ENCODE measurements at regions of chr6 and their contacts with region 1.

Region 1: GRCh38 chr6:144215932-144216667 is 65.8 kb downstream of the STX11 start:
- DNase-seq: peak; percentile 100
- H3K4me3 ChIP-seq: peak overlapping the region; percentile 68 to 77 (median 74)
- H3K27ac ChIP-seq: peak overlapping the region; percentile 89 to 96 (median 95)
- H3K4me1 ChIP-seq: peaks cover 18 to 26% (median 23%) of the 10 kb centered on the region in 4 donors
- H3K27me3 ChIP-seq: no peaks in the 10 kb centered on the region
- CTCF ChIP-seq: peak; percentile 30 to 66 (median 53)
- EP300 ChIP-seq: no peak
- POLR2A ChIP-seq: no peak

Region 2: GRCh38 chr6:144104898-144105487 is 111.1 kb before region 1 on chr6:
- intact Hi-C with region 1: loop called (anchors 2 kb)
- DNase-seq: no peak
- H3K4me3 ChIP-seq: no peak overlapping the region
- H3K27ac ChIP-seq: no peak overlapping the region
- H3K4me1 ChIP-seq: no peaks in the 10 kb centered on the region
- H3K27me3 ChIP-seq: no peaks in the 10 kb centered on the region
- CTCF ChIP-seq: peak; percentile 61 to 64 (median 62)
- EP300 ChIP-seq: no peak
- POLR2A ChIP-seq: no peak

Region 3: DNA sequence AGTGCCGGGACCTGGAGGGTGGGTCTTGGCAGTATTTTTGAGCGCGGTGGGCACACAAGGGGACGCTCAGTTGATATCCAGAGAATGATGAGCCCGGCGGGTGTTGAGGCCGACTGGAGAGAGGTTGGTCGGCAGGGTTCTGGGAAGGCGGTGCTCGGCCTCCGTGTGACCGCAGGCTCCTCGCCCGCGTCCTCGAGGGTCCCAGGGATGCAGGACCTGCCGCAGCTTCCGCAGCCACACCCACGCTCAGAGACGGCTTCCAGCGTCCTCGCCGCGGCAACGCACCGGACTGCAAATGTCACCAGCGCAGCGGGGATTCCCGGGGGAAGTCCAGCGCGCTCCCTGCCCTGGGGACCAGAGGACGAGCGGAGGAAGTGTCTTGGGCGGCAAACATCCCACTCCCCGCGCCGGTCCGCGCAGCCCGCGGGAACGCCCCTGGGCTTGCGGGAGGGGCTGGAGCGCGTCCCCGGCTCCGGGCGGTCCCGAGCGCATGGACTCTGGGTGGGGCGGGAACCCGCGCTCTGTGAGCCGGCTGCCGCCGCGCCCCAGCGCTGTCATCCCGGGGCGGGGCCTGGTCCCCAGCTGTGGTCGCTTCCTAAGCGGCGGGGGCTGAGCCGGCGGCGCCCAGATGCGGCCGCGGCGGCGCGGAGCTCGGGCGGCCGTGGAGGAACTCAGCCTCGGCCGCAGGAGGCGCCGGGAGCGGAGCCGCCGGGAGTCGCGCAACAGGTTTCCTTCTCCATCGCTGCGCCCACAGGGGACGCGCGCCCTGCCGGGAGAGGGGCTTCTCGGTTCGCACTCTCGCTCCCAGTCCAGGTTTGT is 66.0 kb before region 1 on chr6 and contains the start of gene STX11:
- intact Hi-C with region 1: loop called (anchors 5 kb)
- DNase-seq: peak; percentile 91
- H3K4me3 ChIP-seq: peak within 1 kb of the TSS; percentile 66 to 90 (median 75)
- H3K27ac ChIP-seq: peak within 1 kb of the TSS; percentile 51 to 72 (median 61)
- H3K4me1 ChIP-seq: peaks cover 8 to 24% (median 22%) of the 10 kb centered on the region in 4 donors
- H3K27me3 ChIP-seq: peaks cover 0 to 38% (median 0%) of the 10 kb centered on the region in 4 donors
- CTCF ChIP-seq: no peak
- EP300 ChIP-seq: no peak
- POLR2A ChIP-seq: no peak
- total RNA-seq, gene STX11: 3.3 to 14.1 (median 7.1) TPM

Region 4: DNA sequence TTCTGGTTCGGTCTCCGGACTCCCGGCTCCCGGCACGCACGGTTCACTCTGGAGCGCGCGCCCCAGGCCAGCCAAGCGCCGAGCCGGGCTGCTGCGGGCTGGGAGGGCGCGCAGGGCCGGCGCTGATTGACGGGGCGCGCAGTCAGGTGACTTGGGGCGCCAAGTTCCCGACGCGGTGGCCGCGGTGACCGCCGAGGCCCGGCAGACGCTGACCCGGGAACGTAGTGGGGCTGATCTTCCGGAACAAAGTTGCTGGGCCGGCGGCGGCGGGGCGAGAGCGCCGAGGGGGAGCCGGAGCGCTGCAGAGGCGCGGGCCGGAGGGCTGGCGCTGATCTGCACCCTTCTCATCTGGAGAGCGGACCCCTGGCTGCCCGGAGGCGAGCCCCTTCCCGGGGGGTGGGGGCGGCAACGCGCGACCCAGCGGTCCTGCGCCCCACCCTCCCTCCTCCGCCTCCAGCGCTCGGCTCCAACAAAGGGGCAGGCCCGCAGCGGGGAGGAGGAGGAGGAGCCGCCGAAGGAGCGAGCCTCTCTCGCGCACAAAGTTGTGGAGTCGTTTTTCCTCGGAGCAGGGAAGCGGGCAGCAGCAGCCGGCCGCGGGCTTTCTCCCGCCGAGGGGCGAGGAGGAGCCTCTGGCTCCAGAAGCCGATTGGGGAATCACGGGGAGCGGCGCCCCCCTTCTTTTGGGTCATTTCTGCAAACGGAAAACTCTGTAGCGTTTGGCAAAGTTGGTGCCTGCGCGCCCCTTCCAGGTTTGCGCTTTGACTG is 68.9 kb after region 1 on chr6 and contains the start of gene UTRN:
- intact Hi-C with region 1: loop called (anchors 2 kb)
- DNase-seq: peak; percentile 93
- H3K4me3 ChIP-seq: peak within 1 kb of the TSS; percentile 76 to 93 (median 88)
- H3K27ac ChIP-seq: peak within 1 kb of the TSS; percentile 91 to 97 (median 96)
- H3K4me1 ChIP-seq: peaks cover 14 to 24% (median 22%) of the 10 kb centered on the region in 4 donors
- H3K27me3 ChIP-seq: no peaks in the 10 kb centered on the region
- CTCF ChIP-seq: no peak
- EP300 ChIP-seq: no peak
- POLR2A ChIP-seq: peak; percentile 3
- total RNA-seq, gene UTRN: 98.6 to 112 (median 102) TPM

Region 5: GRCh38 chr6:144482142-144482541 is 266.0 kb after region 1 on chr6:
- intact Hi-C with region 1: loop called (anchors 2 kb)
- DNase-seq: no peak
- H3K4me3 ChIP-seq: no peak overlapping the region
- H3K27ac ChIP-seq: no peak overlapping the region
- H3K4me1 ChIP-seq: peaks cover 11 to 19% (median 12%) of the 10 kb centered on the region in 4 donors
- H3K27me3 ChIP-seq: no peaks in the 10 kb centered on the region
- CTCF ChIP-seq: peak; percentile 59 to 73 (median 66)
- EP300 ChIP-seq: no peak
- POLR2A ChIP-seq: no peak

Measured in esophagus muscularis mucosa (tissue), 4 donors.